Activated B cell treated with CpG ODN at 0.5 μM for 24 hours (primary cell): ENCODE measurements at regions of chr5 and their contacts with region 1.

Region 1: DNA sequence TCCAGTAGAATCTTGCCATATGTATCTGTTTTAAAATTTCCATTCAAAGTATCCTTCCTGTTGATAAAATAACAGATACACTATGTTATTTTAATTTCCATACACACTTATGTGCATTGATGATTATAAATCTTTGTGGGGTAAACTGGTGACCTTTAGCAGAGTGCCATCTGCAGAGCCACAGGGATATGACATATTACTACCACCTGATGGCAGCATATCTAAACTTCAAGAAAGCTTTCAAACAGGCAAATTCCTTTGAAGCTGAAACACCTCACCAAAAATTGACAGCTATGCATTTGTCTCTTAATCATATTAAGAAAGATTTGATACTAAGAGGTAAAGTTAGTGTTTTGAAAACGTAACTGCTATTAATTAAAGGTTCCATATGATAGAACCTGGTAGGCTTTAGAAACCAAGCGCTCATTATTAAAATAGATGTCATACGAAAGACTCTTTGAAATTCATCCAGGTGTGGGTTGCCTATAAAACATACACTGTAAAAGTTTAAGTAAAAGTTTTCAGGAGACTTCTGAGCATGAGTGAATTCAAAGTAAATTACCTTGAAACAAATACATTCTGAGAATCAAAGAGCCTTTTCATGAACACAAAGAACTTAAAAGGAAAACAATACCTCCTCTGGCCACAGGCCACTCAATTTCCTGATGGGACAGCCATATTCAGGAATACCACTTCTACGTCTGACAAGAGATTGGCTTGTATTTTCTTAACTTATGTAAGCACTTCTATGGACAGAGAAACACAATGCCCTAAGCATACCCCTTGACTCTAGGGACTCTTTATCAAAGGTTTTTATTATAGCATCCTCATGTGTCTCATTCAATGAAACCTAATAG is 93.3 kb downstream of the KIAA0825 start:
- DNase-seq: no peak
- ATAC-seq: peak; percentile 50
- H3K4me3 Mint-ChIP-seq: no peak overlapping the region
- H3K27ac Mint-ChIP-seq: no peak overlapping the region
- H3K4me1 Mint-ChIP-seq: no peaks in the 10 kb centered on the region
- H3K27me3 Mint-ChIP-seq: no peaks in the 10 kb centered on the region
- CTCF ChIP-seq: no peak

Region 2: DNA sequence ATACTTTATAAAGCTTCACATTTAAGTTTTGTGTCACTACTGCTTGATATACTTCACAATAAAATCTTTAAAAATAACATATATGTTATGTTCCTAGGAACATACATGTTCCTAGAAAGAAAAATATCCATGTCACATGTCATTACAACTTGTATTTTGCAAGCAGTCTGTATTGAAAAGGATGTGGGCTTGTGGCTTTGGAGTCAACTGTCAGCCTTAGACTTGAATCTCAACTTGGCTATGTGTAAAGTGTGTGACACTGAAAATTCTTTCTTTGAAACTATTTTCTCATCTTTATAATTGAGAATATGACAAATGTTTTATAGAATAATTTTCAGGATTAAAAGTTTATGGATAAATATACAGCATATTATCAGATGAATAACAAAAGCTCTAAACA is 179.8 kb before region 1 on chr5:
- CTCF ChIA-PET with region 1: no interaction called
- POLR2A ChIA-PET with region 1: no interaction called
- intact Hi-C with region 1: no loop called
- DNase-seq: no peak
- ATAC-seq: no peak
- H3K4me3 Mint-ChIP-seq: no peak overlapping the region
- H3K27ac Mint-ChIP-seq: no peak overlapping the region
- H3K4me1 Mint-ChIP-seq: no peaks in the 10 kb centered on the region
- H3K27me3 Mint-ChIP-seq: no peaks in the 10 kb centered on the region
- CTCF ChIP-seq: no peak

Region 3: DNA sequence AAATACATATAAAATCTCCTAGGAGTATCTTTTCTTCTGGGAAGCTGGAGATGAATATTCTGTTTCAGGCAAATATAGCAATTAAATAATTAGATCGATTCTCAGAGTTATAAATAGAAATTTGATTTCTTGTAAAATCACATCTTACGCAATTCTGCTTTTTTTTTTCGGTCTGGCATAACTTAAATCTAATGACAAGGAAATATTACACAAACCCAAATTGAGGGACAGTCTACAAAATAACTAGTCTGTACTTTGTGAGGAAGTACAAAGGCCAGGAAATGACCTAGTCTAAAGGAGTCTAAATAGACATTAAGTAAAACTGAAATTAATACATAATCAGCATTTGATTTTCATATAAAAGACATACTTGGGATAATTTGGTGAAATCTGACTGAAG is 40.0 kb before region 1 on chr5:
- CTCF ChIA-PET with region 1: no interaction called
- POLR2A ChIA-PET with region 1: no interaction called
- intact Hi-C with region 1: no loop called
- DNase-seq: no peak
- ATAC-seq: no peak
- H3K4me3 Mint-ChIP-seq: no peak overlapping the region
- H3K27ac Mint-ChIP-seq: no peak overlapping the region
- H3K4me1 Mint-ChIP-seq: no peaks in the 10 kb centered on the region
- H3K27me3 Mint-ChIP-seq: no peaks in the 10 kb centered on the region
- CTCF ChIP-seq: no peak

Region 4: DNA sequence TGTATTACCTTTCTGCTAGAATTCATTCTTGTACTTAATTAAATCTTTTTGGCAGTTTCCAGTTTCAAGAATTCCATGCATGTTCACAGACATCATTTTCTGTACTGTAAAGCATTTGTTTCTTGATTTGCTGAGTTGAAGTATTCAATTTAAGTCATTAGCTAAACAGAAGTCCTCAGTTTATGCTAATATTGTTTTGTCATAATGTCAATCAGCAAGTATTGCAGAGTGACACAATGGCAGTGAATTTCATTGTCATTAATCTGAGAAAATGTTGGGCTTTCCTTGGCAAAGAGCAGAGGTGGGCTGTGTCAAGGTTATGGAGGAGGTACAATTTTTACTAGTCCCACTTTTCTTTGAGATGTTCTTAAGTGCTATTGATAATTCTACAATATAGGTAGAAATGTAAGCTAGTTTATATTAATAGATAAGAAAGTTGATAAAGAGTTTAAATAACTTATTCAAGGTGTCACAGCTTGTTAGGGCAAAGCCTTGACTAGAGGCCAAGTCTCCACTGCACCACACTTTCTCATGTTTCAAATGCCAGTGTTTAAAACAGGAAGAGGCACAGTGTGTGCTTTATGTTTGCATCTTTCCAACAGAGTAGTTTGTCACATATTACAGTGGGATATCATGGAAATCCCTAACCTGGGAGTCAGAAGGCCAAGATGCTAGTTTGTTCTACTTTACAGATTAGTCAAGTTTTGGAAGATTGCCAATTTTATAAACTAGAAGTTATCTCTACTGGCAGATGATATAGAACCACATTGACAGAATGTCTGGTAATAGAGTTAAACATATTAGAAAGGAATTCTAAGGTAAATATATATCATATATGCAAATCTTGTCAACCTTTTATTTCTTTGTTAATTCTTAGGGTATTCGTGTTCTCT is 149.7 kb after region 1 on chr5:
- CTCF ChIA-PET with region 1: no interaction called
- POLR2A ChIA-PET with region 1: no interaction called
- intact Hi-C with region 1: no loop called
- DNase-seq: no peak
- ATAC-seq: no peak
- H3K4me3 Mint-ChIP-seq: no peak overlapping the region
- H3K27ac Mint-ChIP-seq: no peak overlapping the region
- H3K4me1 Mint-ChIP-seq: peaks cover 8% of the 10 kb centered on the region
- H3K27me3 Mint-ChIP-seq: no peaks in the 10 kb centered on the region
- CTCF ChIP-seq: no peak

Region 5: DNA sequence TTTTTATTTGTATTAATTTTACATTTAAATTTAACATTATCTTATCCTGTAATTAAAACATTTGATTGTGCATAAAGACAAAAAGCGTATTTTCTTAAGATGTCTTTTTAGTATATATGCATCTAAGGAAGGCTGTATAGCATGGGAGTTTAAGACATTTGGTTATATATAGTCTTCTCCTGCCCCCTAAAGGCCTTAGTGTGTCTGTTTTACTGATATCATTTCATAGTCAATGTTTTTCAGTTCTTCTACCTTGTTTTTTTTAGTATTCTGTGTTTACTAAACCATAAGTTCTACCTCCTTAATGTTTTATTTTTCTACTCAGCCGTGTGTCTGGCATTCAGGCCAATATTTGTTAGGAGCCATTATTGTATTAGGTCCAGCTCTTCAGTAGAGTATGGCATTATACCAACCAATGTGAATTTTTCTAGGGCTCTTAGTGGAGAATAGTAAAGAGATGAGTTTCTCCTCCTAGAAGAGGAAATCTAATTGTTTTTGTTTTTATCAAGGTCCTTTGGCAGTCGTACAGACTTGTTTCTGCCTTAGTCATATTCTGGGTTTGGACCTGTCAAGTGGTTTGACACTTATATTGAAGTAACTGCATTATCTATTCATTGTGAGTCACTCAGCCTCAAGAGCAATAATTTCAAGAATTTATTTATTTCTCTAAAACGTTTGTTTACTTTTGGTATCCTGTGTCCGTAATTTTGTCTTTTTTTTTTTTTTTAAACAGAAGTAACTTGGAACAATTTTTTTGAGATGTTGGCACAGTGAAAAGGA is 168.2 kb after region 1 on chr5:
- CTCF ChIA-PET with region 1: interaction called, 3 read pairs
- POLR2A ChIA-PET with region 1: no interaction called
- intact Hi-C with region 1: loop called (anchors 1 kb)
- DNase-seq: no peak
- ATAC-seq: peak; percentile 31
- H3K4me3 Mint-ChIP-seq: no peak overlapping the region
- H3K27ac Mint-ChIP-seq: no peak overlapping the region
- H3K4me1 Mint-ChIP-seq: no peaks in the 10 kb centered on the region
- H3K27me3 Mint-ChIP-seq: no peaks in the 10 kb centered on the region
- CTCF ChIP-seq: no peak

Region 6: GRCh38 chr5:94740286-94740685 is 215.2 kb after region 1 on chr5:
- CTCF ChIA-PET with region 1: interaction called, 39 read pairs
- POLR2A ChIA-PET with region 1: interaction called, 3 read pairs
- intact Hi-C with region 1: loop called (anchors 1 kb)
- DNase-seq: no peak
- ATAC-seq: no peak
- H3K4me3 Mint-ChIP-seq: no peak overlapping the region
- H3K27ac Mint-ChIP-seq: no peak overlapping the region
- H3K4me1 Mint-ChIP-seq: peaks cover 7% of the 10 kb centered on the region
- H3K27me3 Mint-ChIP-seq: no peaks in the 10 kb centered on the region
- CTCF ChIP-seq: no peak

Region 7: DNA sequence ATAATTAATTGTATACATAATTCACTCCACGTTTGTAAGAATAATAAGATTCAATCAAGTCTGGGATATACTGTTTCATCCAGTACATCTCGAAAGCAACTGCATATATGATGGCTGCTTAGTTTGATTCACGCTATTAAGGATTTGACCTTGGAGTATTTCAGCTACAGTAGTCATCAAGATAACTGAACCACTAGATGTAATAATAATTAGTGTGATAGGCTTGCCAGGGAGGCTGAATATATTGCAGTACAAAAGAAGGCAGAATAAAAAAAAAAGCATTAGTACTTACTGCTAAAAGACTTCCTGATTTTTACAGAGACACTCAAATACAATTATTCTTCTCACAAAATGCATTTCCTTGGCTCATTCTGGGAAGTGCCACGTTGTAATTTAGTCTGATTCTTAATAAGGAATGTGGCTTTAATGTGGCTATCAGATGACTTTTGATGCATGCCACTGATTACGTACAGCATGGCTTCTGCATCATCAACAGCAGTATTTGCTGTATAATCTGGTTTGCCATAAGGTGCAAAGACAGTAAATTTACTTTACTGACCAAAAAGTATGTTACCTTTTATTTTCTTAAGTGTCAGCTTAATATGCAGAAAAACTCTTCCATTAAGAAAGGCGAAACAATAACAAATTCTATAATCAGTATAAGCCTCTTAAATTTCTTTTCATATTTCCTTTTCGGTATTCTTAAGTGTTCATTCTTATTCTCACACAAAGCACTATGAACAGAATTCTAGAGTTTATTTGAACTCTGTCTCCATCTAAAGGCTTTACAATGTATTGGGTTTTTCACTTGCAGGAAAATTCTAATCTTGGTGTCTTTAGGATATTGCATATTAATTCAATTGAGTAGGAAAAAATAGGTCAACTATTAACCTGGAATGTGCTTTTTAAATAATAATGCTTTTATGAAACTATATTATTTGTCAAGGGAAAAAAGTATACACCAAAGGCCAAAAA is 259.8 kb after region 1 on chr5:
- CTCF ChIA-PET with region 1: interaction called, 6 read pairs
- POLR2A ChIA-PET with region 1: no interaction called
- intact Hi-C with region 1: loop called (anchors 1 kb)
- DNase-seq: no peak
- ATAC-seq: no peak
- H3K4me3 Mint-ChIP-seq: no peak overlapping the region
- H3K27ac Mint-ChIP-seq: no peak overlapping the region
- H3K4me1 Mint-ChIP-seq: no peaks in the 10 kb centered on the region
- H3K27me3 Mint-ChIP-seq: no peaks in the 10 kb centered on the region
- CTCF ChIP-seq: no peak

Region 8: GRCh38 chr5:94908889-94909480 is 383.9 kb after region 1 on chr5:
- CTCF ChIA-PET with region 1: no interaction called
- POLR2A ChIA-PET with region 1: no interaction called
- intact Hi-C with region 1: loop called (anchors 2 kb)
- DNase-seq: no peak
- ATAC-seq: no peak
- H3K4me3 Mint-ChIP-seq: no peak overlapping the region
- H3K27ac Mint-ChIP-seq: no peak overlapping the region
- H3K4me1 Mint-ChIP-seq: no peaks in the 10 kb centered on the region
- H3K27me3 Mint-ChIP-seq: no peaks in the 10 kb centered on the region
- CTCF ChIP-seq: no peak